Transverse colon (tissue), 4 donors: ENCODE measurements at regions of chr6 and their contacts with region 1.

Region 1: GRCh38 chr6:45421709-45422502 is 44.2 kb upstream of the SUPT3H start:
- DNase-seq: peak; percentile 66
- H3K4me3 ChIP-seq: peak overlapping the region; percentile 29 to 64 (median 43)
- H3K27ac ChIP-seq: peak overlapping the region; percentile 77 to 85 (median 82)
- H3K4me1 ChIP-seq: peaks cover 0 to 44% (median 32%) of the 10 kb centered on the region in 4 donors
- H3K27me3 ChIP-seq: peaks cover 84% of the 10 kb centered on the region
- CTCF ChIP-seq: peak in 1 of 5 experiments; percentile 14
- EP300 ChIP-seq: no peak
- POLR2A ChIP-seq: peak; percentile 24

Region 2: GRCh38 chr6:45377554-45378333 is 44.2 kb before region 1 on chr6 and contains the start of gene SUPT3H:
- in situ Hi-C with region 1: no loop called
- intact Hi-C with region 1: loop called (anchors 5 kb)
- DNase-seq: peak; percentile 93
- H3K4me3 ChIP-seq: peak within 1 kb of the TSS; percentile 63 to 87 (median 79)
- H3K27ac ChIP-seq: peak within 1 kb of the TSS; percentile 94 to 97 (median 96)
- H3K4me1 ChIP-seq: peaks cover 4 to 14% (median 10%) of the 10 kb centered on the region in 4 donors
- H3K27me3 ChIP-seq: no peaks in the 10 kb centered on the region
- CTCF ChIP-seq: no peak
- EP300 ChIP-seq: no peak
- POLR2A ChIP-seq: peak; percentile 78
- total RNA-seq, gene SUPT3H: 0.80 to 12.7 (median 3.0) TPM